ENCODE measurements at regions of chr2 and their contacts with region 1.

Region 1: DNA sequence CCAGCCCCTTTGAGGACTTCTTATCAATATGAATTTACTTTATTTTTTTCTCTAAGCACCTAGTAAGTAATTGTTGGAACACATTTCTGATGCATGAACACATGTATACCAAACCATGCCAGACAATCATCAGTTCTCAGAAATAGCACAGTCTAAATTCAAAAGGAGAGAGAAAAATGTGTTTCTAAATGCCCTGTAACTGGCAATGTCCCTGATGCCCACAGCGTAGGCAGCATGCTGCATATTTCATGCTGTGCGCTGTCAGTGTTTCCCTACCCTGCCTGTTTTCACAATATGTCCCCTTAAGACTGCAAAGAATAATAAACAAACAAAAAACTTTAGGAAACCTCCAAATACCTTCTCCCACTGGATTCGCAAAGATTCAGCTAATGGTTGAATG is 881.0 kb upstream of the CHAC2 start:
- DNase-seq: no peak
- ATAC-seq: no peak
- H3K4me3 ChIP-seq: no peak overlapping the region
- H3K27ac ChIP-seq: no peak overlapping the region
- H3K4me1 ChIP-seq: no peaks in the 10 kb centered on the region
- H3K27me3 ChIP-seq: no peaks in the 10 kb centered on the region
- CTCF ChIP-seq: no peak

Region 2: GRCh38 chr2:52542297-52542696 is 344.3 kb before region 1 on chr2:
- intact Hi-C with region 1: no loop called
- DNase-seq: no peak
- ATAC-seq: no peak
- H3K4me3 ChIP-seq: no peak overlapping the region
- H3K27ac ChIP-seq: no peak overlapping the region
- H3K4me1 ChIP-seq: no peaks in the 10 kb centered on the region
- H3K27me3 ChIP-seq: no peaks in the 10 kb centered on the region
- CTCF ChIP-seq: no peak

Region 3: DNA sequence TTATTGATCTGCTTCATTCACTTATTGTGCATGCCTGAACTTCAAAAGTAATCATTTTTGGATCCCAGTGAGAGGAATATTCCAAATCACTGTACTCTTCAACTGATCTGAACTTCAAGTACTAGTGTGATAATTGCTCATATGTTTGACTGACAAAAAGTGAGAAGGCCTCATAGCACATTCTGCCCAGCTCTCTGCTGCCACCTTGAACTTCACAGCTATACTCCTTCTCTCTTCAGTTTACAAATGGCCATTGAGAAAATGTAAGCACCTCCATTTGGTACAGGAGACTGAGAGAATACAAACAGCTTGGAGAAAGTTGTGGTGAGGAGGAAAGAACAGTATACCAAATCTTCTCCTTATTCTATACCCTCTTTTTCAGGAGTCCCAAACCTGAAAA is 64.9 kb before region 1 on chr2:
- intact Hi-C with region 1: loop called in 1 of 10 experiments (anchors 2 kb)
- DNase-seq: no peak
- ATAC-seq: no peak
- H3K4me3 ChIP-seq: no peak overlapping the region
- H3K27ac ChIP-seq: no peak overlapping the region
- H3K4me1 ChIP-seq: no peaks in the 10 kb centered on the region
- H3K27me3 ChIP-seq: no peaks in the 10 kb centered on the region
- CTCF ChIP-seq: peak in 4 of 9 donors; percentile 9 to 18 (median 14)

Region 4: GRCh38 chr2:53170466-53170865 is 283.9 kb after region 1 on chr2:
- intact Hi-C with region 1: no loop called
- DNase-seq: no peak
- ATAC-seq: peak in 3 of 8 donors; percentile 29 to 54 (median 52)
- H3K4me3 ChIP-seq: no peak overlapping the region
- H3K27ac ChIP-seq: no peak overlapping the region
- H3K4me1 ChIP-seq: peaks cover 0 to 12% (median 0%) of the 10 kb centered on the region in 9 donors
- H3K27me3 ChIP-seq: no peaks in the 10 kb centered on the region
- CTCF ChIP-seq: no peak

Measured in heart right ventricle (tissue), 16 donors.